ENCODE measurements at regions of chr19 and their contacts with region 1.

Region 1: DNA sequence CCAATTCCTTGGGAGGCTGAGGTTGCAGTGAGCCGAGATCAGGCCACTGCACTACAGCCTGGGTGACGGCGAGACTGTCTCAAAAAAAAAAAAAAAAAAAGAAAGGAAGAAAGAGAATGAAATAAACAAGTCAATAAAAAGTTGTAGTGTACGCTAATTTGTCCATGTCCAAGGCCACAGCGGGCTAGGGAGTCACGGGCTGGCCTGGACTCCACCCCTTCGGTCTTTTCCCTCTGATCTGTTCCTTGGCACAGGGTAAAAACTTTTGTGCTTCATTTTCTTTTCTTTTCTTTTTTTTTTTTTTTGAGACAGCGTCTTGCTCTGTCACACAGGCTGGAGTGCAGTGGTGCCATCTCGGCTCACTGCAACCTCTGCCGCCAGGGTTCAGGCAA is 19.4 kb upstream of the MKNK2 start:
- DNase-seq: no peak
- H3K4me3 Mint-ChIP-seq: no peak overlapping the region
- H3K27ac Mint-ChIP-seq: peak overlapping the region; percentile 55
- H3K4me1 Mint-ChIP-seq: peaks cover 14% of the 10 kb centered on the region
- H3K27me3 Mint-ChIP-seq: no peaks in the 10 kb centered on the region

Region 2: GRCh38 chr19:2016041-2016807 is 54.2 kb before region 1 on chr19:
- intact Hi-C with region 1: loop called (anchors 1 kb)
- DNase-seq: peak; percentile 58
- H3K4me3 Mint-ChIP-seq: peak overlapping the region; percentile 78
- H3K27ac Mint-ChIP-seq: peak overlapping the region; percentile 17
- H3K4me1 Mint-ChIP-seq: peaks cover 8% of the 10 kb centered on the region
- H3K27me3 Mint-ChIP-seq: no peaks in the 10 kb centered on the region